ENCODE measurements at regions of chr6 and their contacts with region 1.

Region 1: GRCh38 chr6:138467901-138468300 is 31.4 kb downstream of the NHSL1 start:
- DNase-seq: no peak
- H3K4me3 ChIP-seq: no peak overlapping the region
- H3K27ac ChIP-seq: no peak overlapping the region
- H3K4me1 ChIP-seq: no peaks in the 10 kb centered on the region
- H3K27me3 ChIP-seq: no peaks in the 10 kb centered on the region
- CTCF ChIP-seq: no peak
- POLR2A ChIP-seq: no peak

Region 2: DNA sequence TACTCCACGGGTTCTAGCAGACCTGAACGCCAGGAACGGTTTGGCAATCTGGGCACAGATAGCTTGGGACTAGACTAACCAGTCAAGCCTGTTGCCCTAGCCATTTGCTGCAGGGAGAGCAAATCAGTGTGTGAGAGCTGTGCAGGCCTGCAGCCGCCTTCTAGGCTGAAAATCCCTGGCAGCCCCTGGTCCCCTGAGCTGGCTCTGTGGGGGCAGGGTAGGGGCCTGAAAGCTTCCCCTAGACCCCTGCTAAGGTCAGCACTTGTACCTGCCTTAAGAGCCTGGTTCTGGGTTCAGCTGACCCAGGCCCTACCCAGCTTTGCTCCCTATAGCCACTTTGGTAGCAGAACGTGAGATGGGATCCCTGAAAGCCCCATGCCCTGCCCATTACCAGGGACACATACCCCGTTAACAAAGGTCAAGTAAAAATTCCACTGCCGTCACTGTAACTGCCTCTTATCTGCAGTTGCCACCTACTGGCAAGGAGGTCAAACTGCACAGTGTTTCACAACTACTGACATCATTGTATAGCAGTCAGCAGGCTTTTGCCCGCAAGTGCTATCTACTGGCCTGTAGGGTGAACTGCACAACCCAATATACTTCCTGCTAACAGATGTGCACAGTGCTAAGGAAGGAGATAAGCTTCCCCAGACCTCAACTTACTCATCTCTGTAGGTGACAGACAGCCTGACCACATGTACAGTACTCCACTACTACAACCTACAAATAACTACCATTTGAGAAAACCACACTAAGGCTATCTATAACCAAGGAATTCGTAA is 878.6 kb before region 1 on chr6:
- intact Hi-C with region 1: no loop called
- DNase-seq: peak in 1 of 2 donors; percentile 25
- H3K4me3 ChIP-seq: no peak overlapping the region
- H3K27ac ChIP-seq: no peak overlapping the region
- H3K4me1 ChIP-seq: no peaks in the 10 kb centered on the region
- H3K27me3 ChIP-seq: no peaks in the 10 kb centered on the region
- CTCF ChIP-seq: peak in 2 of 3 donors; percentile 40 to 55
- POLR2A ChIP-seq: no peak

Region 3: GRCh38 chr6:138161338-138162110 is 306.4 kb before region 1 on chr6 and contains the start of gene ARFGEF3:
- intact Hi-C with region 1: no loop called
- DNase-seq: peak in 1 of 2 donors; percentile 69
- H3K4me3 ChIP-seq: peak within 1 kb of the TSS; percentile 51 to 82 (median 65)
- H3K27ac ChIP-seq: peak within 1 kb of the TSS; percentile 84 to 88
- H3K4me1 ChIP-seq: no peaks in the 10 kb centered on the region
- H3K27me3 ChIP-seq: no peaks in the 10 kb centered on the region
- CTCF ChIP-seq: no peak
- POLR2A ChIP-seq: no peak
- total RNA-seq, gene ARFGEF3: 1.9 to 28.1 (median 22.0) TPM

Region 4: DNA sequence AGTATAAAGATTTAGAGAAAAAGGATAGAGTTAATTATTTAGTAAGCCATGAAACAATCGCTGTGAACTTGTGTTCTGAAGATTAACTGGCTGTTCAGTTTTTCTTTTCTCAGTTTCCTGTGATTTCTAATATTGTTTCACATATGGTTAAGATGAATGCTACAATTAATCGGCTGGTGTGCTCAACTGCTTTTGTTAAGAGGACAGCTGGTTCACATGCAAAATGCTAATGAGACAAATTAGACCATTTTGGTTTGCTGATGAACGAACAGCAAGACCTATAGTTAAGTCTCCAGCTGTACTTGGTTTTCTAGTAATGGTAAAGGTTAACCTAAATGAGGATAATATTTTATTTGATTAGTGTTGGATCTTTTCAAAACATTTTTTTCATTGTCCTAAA is 42.2 kb after region 1 on chr6:
- intact Hi-C with region 1: loop called (anchors 2 kb)
- DNase-seq: no peak
- H3K4me3 ChIP-seq: no peak overlapping the region
- H3K27ac ChIP-seq: no peak overlapping the region
- H3K4me1 ChIP-seq: no peaks in the 10 kb centered on the region
- H3K27me3 ChIP-seq: no peaks in the 10 kb centered on the region
- CTCF ChIP-seq: no peak
- POLR2A ChIP-seq: no peak

Measured in breast epithelium (tissue), 4 donors.